ENCODE measurements at regions of chr1 and their contacts with region 1.

Region 1: GRCh38 chr1:169100651-169101088 is 5.8 kb upstream of the ATP1B1 start:
- DNase-seq: no peak
- ATAC-seq: no peak
- H3K4me3 ChIP-seq: no peak overlapping the region
- H3K4me3 Mint-ChIP-seq: no peak overlapping the region
- H3K27ac ChIP-seq: no peak overlapping the region
- H3K27ac Mint-ChIP-seq: no peak overlapping the region
- H3K4me1 ChIP-seq: peaks cover 0 to 10% of the 10 kb centered on the region in 2 experiments
- H3K4me1 Mint-ChIP-seq: peaks cover 5 to 9% (median 5%) of the 10 kb centered on the region in 3 donors
- H3K27me3 ChIP-seq: peaks cover 0 to 8% of the 10 kb centered on the region in 2 experiments
- H3K27me3 Mint-ChIP-seq: peaks cover 0 to 2% of the 10 kb centered on the region in 2 donors

Region 2: DNA sequence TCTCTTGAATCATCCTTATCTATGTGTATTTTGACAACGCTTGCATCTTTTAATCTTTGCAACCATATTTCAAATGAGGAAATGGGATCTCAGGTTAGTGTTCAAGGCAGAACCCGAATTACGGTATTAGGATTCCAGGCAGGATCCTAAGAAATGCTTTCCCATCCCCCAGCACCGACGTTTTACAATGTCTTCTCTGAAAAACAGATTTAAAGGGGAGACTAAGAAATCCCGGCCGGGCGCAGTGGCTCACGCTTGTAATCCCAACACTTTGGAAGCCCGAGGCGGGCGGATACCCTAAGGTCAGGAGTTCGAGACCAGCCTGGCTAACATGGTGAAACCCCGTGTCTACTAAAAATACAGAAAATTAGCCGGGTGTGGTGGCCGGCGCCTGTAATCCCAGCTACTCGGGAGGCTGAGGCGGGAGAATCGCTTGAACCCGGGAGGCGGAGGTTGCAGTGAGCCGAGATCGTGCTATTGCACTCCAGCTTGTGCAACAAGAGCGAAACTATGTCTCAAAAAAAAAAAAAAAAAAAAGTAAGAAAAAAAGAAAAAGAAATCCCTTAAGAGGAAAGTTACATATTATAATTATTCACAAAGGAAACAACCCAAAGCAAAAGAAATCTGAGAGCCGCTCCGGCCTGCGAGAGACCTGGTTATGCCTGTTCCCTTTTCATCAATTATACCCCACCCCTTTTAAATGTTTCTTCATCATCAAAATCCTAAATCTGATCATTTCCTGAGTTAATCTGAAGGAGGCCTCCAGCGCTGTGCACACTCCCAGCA is 1430.5 kb after region 1 on chr1:
- CTCF ChIA-PET with region 1: no interaction called
- POLR2A ChIA-PET with region 1: interaction called in 1 of 2 experiments, 14 read pairs
- DNase-seq: peak in 2 of 35 experiments; percentile 0 to 5
- ATAC-seq: peak in 1 of 4 experiments; percentile 12
- H3K4me3 ChIP-seq: peak overlapping the region; percentile 66 to 100
- H3K4me3 Mint-ChIP-seq: no peak overlapping the region
- H3K27ac ChIP-seq: peak overlapping the region; percentile 83
- H3K27ac Mint-ChIP-seq: no peak overlapping the region
- H3K4me1 ChIP-seq: peaks cover 7 to 12% of the 10 kb centered on the region in 2 experiments
- H3K4me1 Mint-ChIP-seq: peaks cover 15 to 17% (median 17%) of the 10 kb centered on the region in 3 donors
- H3K27me3 ChIP-seq: peaks cover 0 to 2% of the 10 kb centered on the region in 2 experiments
- H3K27me3 Mint-ChIP-seq: no peaks in the 10 kb centered on the region